Dendritic cell treated with granulocyte-macrophage colony-stimulating factor and Interleukin-4, amounts not matched to agents 40 ng/mL and 50 ng/mL, for 4 days (primary cell): ENCODE measurements at regions of chr1 and their contacts with region 1.

Region 1: DNA sequence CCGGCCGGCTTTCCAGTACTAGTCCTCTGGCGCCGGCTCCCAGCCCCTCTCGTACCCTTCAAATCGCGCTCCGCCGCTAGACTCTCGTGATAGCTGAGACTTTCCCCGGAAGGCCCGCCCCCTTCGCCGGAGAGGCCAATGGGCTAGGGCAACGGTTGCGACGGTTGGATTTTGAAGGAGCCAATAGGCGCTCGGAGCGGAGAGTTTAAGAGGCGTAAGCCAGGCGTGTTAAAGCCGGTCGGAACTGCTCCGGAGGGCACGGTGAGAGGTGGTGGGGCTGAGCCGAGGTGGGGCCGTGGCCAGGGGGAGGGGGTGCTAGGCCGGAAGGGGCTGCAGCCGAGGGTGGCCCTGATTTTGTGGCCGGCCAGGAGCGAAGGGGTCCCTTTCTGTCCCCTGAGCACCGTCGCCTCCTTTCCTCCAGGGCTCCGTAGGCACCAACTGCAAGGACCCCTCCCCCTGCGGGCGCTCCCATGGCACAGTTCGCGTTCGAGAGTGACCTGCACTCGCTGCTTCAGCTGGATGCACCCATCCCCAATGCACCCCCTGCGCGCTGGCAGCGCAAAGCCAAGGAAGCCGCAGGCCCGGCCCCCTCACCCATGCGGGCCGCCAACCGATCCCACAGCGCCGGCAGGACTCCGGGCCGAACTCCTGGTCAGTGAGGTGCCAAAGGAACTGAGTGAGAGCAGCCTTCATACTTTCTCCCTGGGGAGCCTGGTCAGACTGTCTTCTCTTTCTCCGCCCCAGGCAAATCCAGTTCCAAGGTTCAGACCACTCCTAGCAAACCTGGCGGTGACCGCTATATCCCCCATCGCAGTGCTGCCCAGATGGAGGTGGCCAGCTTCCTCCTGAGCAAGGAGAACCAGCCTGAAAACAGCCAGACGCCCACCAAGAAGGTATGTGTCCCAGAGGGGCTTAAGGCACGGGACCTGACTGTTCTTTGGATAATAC is at the start of gene CDC20:
- H3K4me3 Mint-ChIP-seq: peak within 1 kb of the TSS; percentile 91
- H3K27ac Mint-ChIP-seq: peak within 1 kb of the TSS; percentile 97
- H3K4me1 Mint-ChIP-seq: peaks cover 54% of the 10 kb centered on the region
- H3K27me3 Mint-ChIP-seq: no peaks in the 10 kb centered on the region

Region 2: GRCh38 chr1:43238085-43238484 is 120.9 kb before region 1 on chr1:
- intact Hi-C with region 1: loop called (anchors 5 kb)
- H3K4me3 Mint-ChIP-seq: no peak overlapping the region
- H3K27ac Mint-ChIP-seq: no peak overlapping the region
- H3K4me1 Mint-ChIP-seq: peaks cover 16% of the 10 kb centered on the region
- H3K27me3 Mint-ChIP-seq: no peaks in the 10 kb centered on the region

Region 3: DNA sequence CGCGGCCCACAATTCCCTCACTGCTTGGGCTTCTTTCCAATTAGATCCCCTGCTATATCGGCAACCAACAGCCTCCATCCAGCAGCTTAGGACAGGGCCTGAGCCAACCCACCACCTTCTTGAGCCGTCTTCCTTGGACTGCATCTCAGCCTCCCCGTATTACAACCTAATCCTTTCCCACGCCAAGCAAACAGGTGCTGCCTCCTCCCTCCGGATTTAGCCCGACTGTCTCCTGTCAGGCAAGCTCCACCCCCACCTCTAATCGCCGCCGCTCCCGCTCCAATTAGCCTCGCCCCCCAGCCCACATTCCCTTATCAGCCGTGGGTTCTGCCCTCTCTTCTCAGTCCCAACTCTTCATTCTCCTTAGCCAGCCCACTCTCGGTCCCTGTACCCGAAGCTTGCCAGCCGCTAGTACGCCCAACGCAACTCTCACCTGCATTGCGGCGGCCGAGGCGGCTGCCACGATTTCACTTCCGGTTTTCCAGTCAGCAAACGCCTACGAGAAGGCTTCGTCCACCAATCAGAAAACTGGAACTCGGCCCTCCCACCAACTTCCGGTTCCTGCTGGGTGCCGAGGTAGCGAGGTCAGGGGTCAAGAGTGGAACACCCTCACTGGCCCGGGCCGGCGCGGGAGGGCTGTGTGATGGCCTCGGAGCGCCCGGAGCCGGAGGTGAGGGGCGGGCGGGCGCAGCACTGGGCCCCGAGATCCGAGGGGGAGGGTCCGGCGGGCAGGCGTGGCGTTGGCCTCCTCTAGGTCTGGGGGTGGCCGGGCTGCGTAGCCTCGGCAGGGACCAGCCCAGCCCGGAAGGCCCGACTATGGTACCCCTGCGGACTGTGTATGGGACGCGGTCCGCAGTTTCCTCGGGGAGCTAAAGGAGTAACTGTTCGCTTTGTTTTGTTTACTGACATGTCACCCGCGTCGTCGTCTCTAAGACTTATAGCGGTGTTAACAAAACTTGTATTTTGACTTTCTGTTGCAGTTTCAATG is 30.6 kb after region 1 on chr1 and contains the starts of genes MED8 and SZT2:
- intact Hi-C with region 1: loop called (anchors 1 kb)
- H3K4me3 Mint-ChIP-seq: peak within 1 kb of the TSS; percentile 99
- H3K27ac Mint-ChIP-seq: peak within 1 kb of the TSS; percentile 92
- H3K4me1 Mint-ChIP-seq: peaks cover 61% of the 10 kb centered on the region
- H3K27me3 Mint-ChIP-seq: no peaks in the 10 kb centered on the region